ENCODE measurements at regions of chr11 and their contacts with region 1.

Region 1: GRCh38 chr11:6353367-6353987 is 33.2 kb upstream of the CAVIN3 start:
- DNase-seq: peak; percentile 76
- H3K4me3 ChIP-seq: no peak overlapping the region
- H3K27ac ChIP-seq: no peak overlapping the region
- H3K4me1 ChIP-seq: peaks cover 0 to 22% (median 17%) of the 10 kb centered on the region in 4 donors
- H3K27me3 ChIP-seq: no peaks in the 10 kb centered on the region
- CTCF ChIP-seq: peak; percentile 79 to 90 (median 86)
- EP300 ChIP-seq: no peak
- POLR2A ChIP-seq: no peak

Region 2: GRCh38 chr11:6022956-6023355 is 330.5 kb before region 1 on chr11:
- intact Hi-C with region 1: loop called (anchors 2 kb)
- DNase-seq: no peak
- H3K4me3 ChIP-seq: no peak overlapping the region
- H3K27ac ChIP-seq: no peak overlapping the region
- H3K4me1 ChIP-seq: no peaks in the 10 kb centered on the region
- H3K27me3 ChIP-seq: no peaks in the 10 kb centered on the region
- CTCF ChIP-seq: peak in 3 of 4 experiments; percentile 22 to 45 (median 42)
- EP300 ChIP-seq: no peak
- POLR2A ChIP-seq: no peak

Region 3: GRCh38 chr11:6251120-6251733 is 102.2 kb before region 1 on chr11:
- intact Hi-C with region 1: loop called (anchors 1 kb)
- DNase-seq: peak; percentile 86
- H3K4me3 ChIP-seq: no peak overlapping the region
- H3K27ac ChIP-seq: peak overlapping the region in 3 of 4 donors; percentile 67 to 79 (median 74)
- H3K4me1 ChIP-seq: peaks cover 0 to 23% (median 15%) of the 10 kb centered on the region in 4 donors
- H3K27me3 ChIP-seq: no peaks in the 10 kb centered on the region
- CTCF ChIP-seq: peak; percentile 86 to 96 (median 87)
- EP300 ChIP-seq: no peak
- POLR2A ChIP-seq: no peak

Region 4: GRCh38 chr11:6298605-6299004 is 54.9 kb before region 1 on chr11:
- intact Hi-C with region 1: loop called (anchors 5 kb)
- DNase-seq: no peak
- H3K4me3 ChIP-seq: no peak overlapping the region
- H3K27ac ChIP-seq: no peak overlapping the region
- H3K4me1 ChIP-seq: no peaks in the 10 kb centered on the region
- H3K27me3 ChIP-seq: no peaks in the 10 kb centered on the region
- CTCF ChIP-seq: peak in 1 of 4 experiments; percentile 26
- EP300 ChIP-seq: no peak
- POLR2A ChIP-seq: no peak

Measured in sigmoid colon (tissue), 7 donors.